Activated CD4-positive, alpha-beta T cell treated with anti-CD3 and anti-CD28 coated beads, Interleukin-2, amount 10 ng/mL, durations not matched to agents 24 days and 14 days (primary cell): ENCODE measurements at regions of chrX and their contacts with region 1.

Region 1: GRCh38 chrX:10906866-10907265 is 204.3 kb upstream of the HCCS start:
- DNase-seq: no peak
- H3K4me3 Mint-ChIP-seq: no peak overlapping the region
- H3K27ac Mint-ChIP-seq: no peak overlapping the region
- H3K4me1 Mint-ChIP-seq: no peaks in the 10 kb centered on the region
- H3K27me3 Mint-ChIP-seq: no peaks in the 10 kb centered on the region

Region 2: GRCh38 chrX:10633722-10634121 is 273.1 kb before region 1 on chrX:
- intact Hi-C with region 1: loop called (anchors 5 kb)
- DNase-seq: no peak
- H3K4me3 Mint-ChIP-seq: no peak overlapping the region
- H3K27ac Mint-ChIP-seq: no peak overlapping the region
- H3K4me1 Mint-ChIP-seq: no peaks in the 10 kb centered on the region
- H3K27me3 Mint-ChIP-seq: no peaks in the 10 kb centered on the region

Region 3: GRCh38 chrX:10952619-10953018 is 45.8 kb after region 1 on chrX:
- intact Hi-C with region 1: no loop called
- DNase-seq: no peak
- H3K4me3 Mint-ChIP-seq: no peak overlapping the region
- H3K27ac Mint-ChIP-seq: no peak overlapping the region
- H3K4me1 Mint-ChIP-seq: no peaks in the 10 kb centered on the region
- H3K27me3 Mint-ChIP-seq: no peaks in the 10 kb centered on the region